B cell (primary cell): ENCODE measurements at regions of chr3 and their contacts with region 1.

Region 1: DNA sequence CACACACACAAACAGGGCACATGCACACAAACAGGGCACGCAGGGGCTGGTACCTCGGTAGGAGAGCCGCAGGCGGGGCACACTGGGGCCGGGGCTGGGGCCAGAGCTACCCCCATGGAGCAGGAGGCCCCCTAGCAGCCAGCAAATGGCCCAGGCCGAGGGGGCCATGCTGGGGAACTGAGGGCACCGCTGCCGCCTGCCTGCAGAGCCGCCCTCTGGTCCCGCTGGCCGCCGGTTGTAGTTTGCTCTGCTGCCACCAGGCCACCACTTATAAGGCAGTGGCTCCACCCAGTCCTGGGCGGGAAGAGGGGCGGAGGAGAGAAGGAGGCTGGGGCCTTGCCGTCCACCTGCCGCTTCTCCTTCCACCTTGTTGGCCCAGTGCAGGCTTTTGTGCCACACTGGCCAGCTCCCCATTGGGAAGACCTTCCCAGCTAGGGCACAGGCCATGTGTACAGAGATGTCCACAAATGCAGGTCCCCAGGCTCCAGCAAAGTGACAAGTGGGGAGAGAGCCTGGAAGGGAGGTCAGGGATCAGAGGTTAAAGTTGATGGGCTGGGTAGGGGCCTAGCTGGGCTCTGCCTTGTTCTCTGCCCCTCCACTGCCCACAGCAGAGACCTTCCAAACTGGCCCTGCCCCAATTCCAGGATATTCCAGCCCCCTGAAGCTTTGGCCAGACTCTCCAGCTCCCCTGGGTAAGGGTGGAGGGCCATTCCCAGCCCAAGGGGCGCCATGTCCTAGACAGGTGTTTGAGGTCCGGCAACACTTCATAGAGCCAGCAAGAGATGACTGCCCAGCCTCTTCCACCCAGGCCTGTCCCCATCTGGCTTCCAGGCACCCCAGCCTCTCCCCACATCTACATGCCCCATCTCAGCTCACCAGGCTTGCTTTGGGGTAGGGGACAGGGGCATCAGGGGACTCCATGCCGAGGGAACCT is at the start of gene SEMA3G:
- DNase-seq: peak; percentile 80
- ATAC-seq: peak; percentile 96
- H3K4me3 ChIP-seq: no peak within 1 kb of the TSS
- H3K4me3 Mint-ChIP-seq: no peak within 1 kb of the TSS
- H3K27ac ChIP-seq: no peak within 1 kb of the TSS
- H3K27ac Mint-ChIP-seq: no peak within 1 kb of the TSS
- H3K4me1 ChIP-seq: peaks cover 0 to 13% of the 10 kb centered on the region in 2 donors
- H3K4me1 Mint-ChIP-seq: peaks cover 6% of the 10 kb centered on the region
- H3K27me3 ChIP-seq: no peaks in the 10 kb centered on the region
- H3K27me3 Mint-ChIP-seq: no peaks in the 10 kb centered on the region
- CTCF ChIP-seq: peak; percentile 55
- total RNA-seq, gene SEMA3G: 0.27 and 0.42 TPM in 2 replicates

Region 2: DNA sequence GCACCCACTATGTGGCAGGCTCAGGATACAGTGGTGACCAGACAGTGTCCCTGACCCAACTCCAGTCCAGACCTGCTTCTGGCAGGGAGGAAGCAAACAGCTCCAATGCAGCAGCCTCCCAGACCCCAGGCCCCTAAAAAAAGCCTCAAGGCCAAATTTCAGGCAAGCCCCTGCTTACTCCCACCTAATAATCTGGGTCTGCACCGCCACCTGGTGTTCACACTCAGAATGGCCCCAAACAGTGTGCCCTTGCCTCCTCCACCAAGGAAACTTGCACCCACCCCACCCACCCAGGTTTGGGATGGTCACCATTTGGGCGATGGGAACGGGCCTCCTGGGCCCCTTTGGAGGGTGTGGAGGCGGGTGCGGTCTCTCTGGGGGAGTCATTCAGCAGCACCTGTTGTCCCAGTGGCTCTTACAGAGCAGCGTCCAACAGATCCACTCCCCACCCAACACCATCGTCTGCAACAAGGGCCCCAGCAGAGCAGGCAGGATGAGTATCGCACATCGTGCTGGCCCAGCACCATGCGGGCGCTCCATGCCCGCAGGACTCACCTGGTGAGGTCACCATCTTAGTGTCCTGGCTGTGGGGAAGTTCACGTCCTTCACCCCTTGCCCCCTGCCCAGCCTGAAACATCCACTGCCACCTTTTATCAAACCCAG is 1894.9 kb before region 1 on chr3:
- CTCF ChIA-PET with region 1: no interaction called
- POLR2A ChIA-PET with region 1: no interaction called
- intact Hi-C with region 1: no loop called
- DNase-seq: peak; percentile 70
- ATAC-seq: peak; percentile 68
- H3K4me3 ChIP-seq: no peak overlapping the region
- H3K4me3 Mint-ChIP-seq: no peak overlapping the region
- H3K27ac ChIP-seq: no peak overlapping the region
- H3K27ac Mint-ChIP-seq: no peak overlapping the region
- H3K4me1 ChIP-seq: no peaks in the 10 kb centered on the region
- H3K4me1 Mint-ChIP-seq: no peaks in the 10 kb centered on the region
- H3K27me3 ChIP-seq: peaks cover 0 to 3% (median 0%) of the 10 kb centered on the region in 4 experiments
- H3K27me3 Mint-ChIP-seq: no peaks in the 10 kb centered on the region
- CTCF ChIP-seq: peak; percentile 84

Region 3: GRCh38 chr3:52001443-52001974 is 443.6 kb before region 1 on chr3:
- CTCF ChIA-PET with region 1: interaction called, 7 read pairs
- POLR2A ChIA-PET with region 1: no interaction called
- intact Hi-C with region 1: loop called (anchors 1 kb)
- DNase-seq: peak; percentile 91
- ATAC-seq: peak; percentile 99
- H3K4me3 ChIP-seq: no peak overlapping the region
- H3K4me3 Mint-ChIP-seq: no peak overlapping the region
- H3K27ac ChIP-seq: no peak overlapping the region
- H3K27ac Mint-ChIP-seq: peak overlapping the region; percentile 37
- H3K4me1 ChIP-seq: peaks cover 6 to 13% of the 10 kb centered on the region in 2 donors
- H3K4me1 Mint-ChIP-seq: peaks cover 5% of the 10 kb centered on the region
- H3K27me3 ChIP-seq: no peaks in the 10 kb centered on the region
- H3K27me3 Mint-ChIP-seq: peaks cover 6% of the 10 kb centered on the region
- CTCF ChIP-seq: peak; percentile 90

Region 4: DNA sequence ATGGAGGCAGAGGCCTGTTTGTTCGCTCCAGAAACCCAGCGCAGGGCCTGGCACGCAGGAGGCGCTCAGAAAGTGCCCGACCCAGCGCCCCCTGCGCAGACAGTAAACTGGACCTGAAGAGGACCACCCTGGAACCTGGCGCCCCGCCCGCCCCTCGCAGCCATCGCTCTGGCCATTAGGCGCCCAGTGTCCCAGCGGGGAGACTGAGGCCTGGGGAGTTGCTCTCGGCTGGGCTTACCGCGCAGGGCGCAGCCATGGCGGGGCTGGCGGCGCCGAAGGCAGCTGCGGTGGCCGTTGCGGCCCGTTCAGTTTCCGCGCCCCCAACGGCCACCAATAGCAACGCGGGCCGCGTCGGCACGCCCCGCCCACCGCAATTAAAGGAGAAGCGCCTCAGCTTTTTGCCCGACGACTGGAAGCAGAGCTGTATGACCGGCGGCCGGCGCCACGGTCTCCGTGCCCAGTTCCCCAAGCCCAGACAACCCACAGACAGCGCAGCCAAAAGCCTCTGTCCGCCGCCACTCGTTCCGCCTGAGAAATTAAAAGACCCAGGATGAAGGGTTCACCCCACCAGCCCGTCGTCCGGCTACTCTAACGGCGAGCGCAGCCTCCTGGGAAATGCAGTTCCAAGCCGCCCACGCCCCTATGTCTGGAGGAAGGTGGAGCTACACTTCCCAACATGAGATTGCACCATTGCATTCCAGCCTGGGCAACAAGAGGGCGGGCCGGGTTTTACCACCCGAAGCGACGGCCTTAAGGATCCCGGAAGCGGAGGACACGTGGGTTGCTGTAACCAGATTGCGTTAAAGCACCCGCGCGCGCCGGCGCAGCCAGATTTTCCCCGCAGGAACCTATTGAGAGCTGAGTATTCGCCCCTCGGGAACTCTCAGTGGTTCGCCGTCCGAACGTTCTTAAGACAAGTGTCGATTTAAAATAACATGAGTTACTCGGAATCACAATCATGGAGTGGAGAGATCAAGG is 290.7 kb before region 1 on chr3 and contains the start of gene POC1A:
- CTCF ChIA-PET with region 1: no interaction called
- POLR2A ChIA-PET with region 1: no interaction called
- intact Hi-C with region 1: no loop called
- DNase-seq: peak; percentile 91
- ATAC-seq: peak; percentile 85
- H3K4me3 ChIP-seq: peak within 1 kb of the TSS; percentile 73 to 93 (median 92)
- H3K4me3 Mint-ChIP-seq: peak within 1 kb of the TSS; percentile 98
- H3K27ac ChIP-seq: peak within 1 kb of the TSS; percentile 79 to 81
- H3K27ac Mint-ChIP-seq: peak within 1 kb of the TSS; percentile 98
- H3K4me1 ChIP-seq: peaks cover 4 to 15% of the 10 kb centered on the region in 2 donors
- H3K4me1 Mint-ChIP-seq: peaks cover 14% of the 10 kb centered on the region
- H3K27me3 ChIP-seq: no peaks in the 10 kb centered on the region
- H3K27me3 Mint-ChIP-seq: no peaks in the 10 kb centered on the region
- CTCF ChIP-seq: peak; percentile 13
- total RNA-seq, gene POC1A: 2.4 and 2.8 TPM in 2 replicates

Region 5: DNA sequence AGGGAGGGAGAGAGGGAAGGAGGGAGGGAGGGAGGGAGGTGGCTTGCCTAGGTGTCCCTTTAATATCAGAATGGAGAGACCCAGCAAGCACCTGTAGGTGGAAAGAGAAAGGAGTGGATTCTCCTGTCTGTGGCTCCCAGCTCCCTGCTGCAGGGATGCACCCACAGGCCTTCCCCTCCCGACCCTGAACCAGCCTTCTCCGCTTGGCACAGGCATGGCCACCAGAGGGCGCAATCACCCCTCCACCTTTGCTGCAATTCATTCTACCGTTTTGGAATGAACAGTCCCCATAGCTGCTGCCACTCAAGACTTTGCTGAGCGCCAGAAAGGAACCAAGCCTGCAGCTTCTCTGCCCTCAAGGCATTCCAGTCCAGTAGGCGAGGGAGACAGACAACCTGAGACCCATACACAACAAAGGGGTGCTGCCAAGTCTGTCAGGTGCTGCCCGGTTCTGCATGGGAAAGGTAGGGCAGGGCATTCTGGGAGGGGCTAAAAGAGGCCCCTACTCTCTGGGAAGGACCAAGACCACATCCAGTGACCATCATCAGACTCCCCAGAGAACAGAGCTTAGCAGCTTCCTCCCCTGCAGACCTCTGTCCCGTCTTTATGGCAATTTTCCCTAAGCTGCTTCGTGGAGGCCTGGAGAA is 224.6 kb before region 1 on chr3:
- CTCF ChIA-PET with region 1: interaction called, 12 read pairs
- POLR2A ChIA-PET with region 1: no interaction called
- intact Hi-C with region 1: loop called (anchors 2 kb)
- DNase-seq: peak; percentile 85
- ATAC-seq: peak; percentile 59
- H3K4me3 ChIP-seq: no peak overlapping the region
- H3K4me3 Mint-ChIP-seq: peak overlapping the region; percentile 66
- H3K27ac ChIP-seq: no peak overlapping the region
- H3K27ac Mint-ChIP-seq: peak overlapping the region; percentile 86
- H3K4me1 ChIP-seq: peaks cover 64 to 90% of the 10 kb centered on the region in 2 donors
- H3K4me1 Mint-ChIP-seq: peaks cover 78% of the 10 kb centered on the region
- H3K27me3 ChIP-seq: no peaks in the 10 kb centered on the region
- H3K27me3 Mint-ChIP-seq: no peaks in the 10 kb centered on the region
- CTCF ChIP-seq: peak; percentile 83

Region 6: DNA sequence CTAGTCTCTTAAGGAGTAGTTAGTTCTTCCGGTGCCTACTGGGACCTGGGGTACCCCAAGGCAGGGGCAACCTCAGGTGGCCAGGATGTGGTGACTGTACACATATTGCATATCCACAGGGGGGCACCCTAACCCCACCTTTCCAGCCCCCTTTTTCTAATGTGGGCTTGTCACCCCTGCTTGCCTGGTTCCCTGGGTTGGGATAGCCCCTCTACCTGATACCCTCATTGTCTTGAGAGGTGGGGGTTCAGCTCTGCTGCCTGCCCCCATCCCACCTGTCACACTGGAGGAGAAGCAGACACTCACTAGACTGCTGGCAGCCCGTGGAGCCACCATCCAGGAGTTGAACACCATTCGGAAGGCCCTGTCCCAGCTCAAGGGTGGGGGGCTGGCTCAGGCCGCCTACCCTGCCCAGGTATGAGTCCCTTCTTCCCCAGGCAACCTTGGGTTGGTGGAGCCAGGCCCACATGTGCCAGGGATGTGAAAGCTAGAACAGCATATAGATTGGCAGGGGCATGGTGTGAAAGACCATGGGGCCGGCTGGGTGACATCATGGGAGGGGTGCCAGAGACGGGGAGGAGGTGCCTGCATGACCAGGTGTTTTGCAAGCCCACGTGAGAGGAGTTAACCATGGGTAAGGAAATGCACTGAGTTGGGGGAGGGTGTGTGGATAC is 153.5 kb before region 1 on chr3:
- CTCF ChIA-PET with region 1: interaction called, 14 read pairs
- POLR2A ChIA-PET with region 1: no interaction called
- intact Hi-C with region 1: loop called (anchors 1 kb)
- DNase-seq: peak; percentile 65
- ATAC-seq: peak; percentile 31
- H3K4me3 ChIP-seq: no peak overlapping the region
- H3K4me3 Mint-ChIP-seq: peak overlapping the region; percentile 37
- H3K27ac ChIP-seq: no peak overlapping the region
- H3K27ac Mint-ChIP-seq: peak overlapping the region; percentile 33
- H3K4me1 ChIP-seq: peaks cover 12 to 15% of the 10 kb centered on the region in 2 donors
- H3K4me1 Mint-ChIP-seq: peaks cover 30% of the 10 kb centered on the region
- H3K27me3 ChIP-seq: no peaks in the 10 kb centered on the region
- H3K27me3 Mint-ChIP-seq: no peaks in the 10 kb centered on the region
- CTCF ChIP-seq: peak; percentile 69

Region 7: GRCh38 chr3:52372822-52373504 is 72.2 kb before region 1 on chr3:
- CTCF ChIA-PET with region 1: interaction called, 7 read pairs
- POLR2A ChIA-PET with region 1: no interaction called
- intact Hi-C with region 1: loop called (anchors 1 kb)
- DNase-seq: peak; percentile 82
- ATAC-seq: peak; percentile 90
- H3K4me3 ChIP-seq: peak overlapping the region in 3 of 5 experiments; percentile 27 to 55 (median 33)
- H3K4me3 Mint-ChIP-seq: peak overlapping the region; percentile 80
- H3K27ac ChIP-seq: peak overlapping the region; percentile 43 to 71
- H3K27ac Mint-ChIP-seq: peak overlapping the region; percentile 85
- H3K4me1 ChIP-seq: peaks cover 17 to 20% of the 10 kb centered on the region in 2 donors
- H3K4me1 Mint-ChIP-seq: peaks cover 25% of the 10 kb centered on the region
- H3K27me3 ChIP-seq: no peaks in the 10 kb centered on the region
- H3K27me3 Mint-ChIP-seq: no peaks in the 10 kb centered on the region
- CTCF ChIP-seq: no peak

Region 8: GRCh38 chr3:52428151-52429005 is 16.7 kb before region 1 on chr3:
- CTCF ChIA-PET with region 1: interaction called, 61 read pairs
- POLR2A ChIA-PET with region 1: no interaction called
- intact Hi-C with region 1: loop called (anchors 1 kb)
- DNase-seq: peak; percentile 55
- ATAC-seq: peak; percentile 56
- H3K4me3 ChIP-seq: no peak overlapping the region
- H3K4me3 Mint-ChIP-seq: no peak overlapping the region
- H3K27ac ChIP-seq: no peak overlapping the region
- H3K27ac Mint-ChIP-seq: no peak overlapping the region
- H3K4me1 ChIP-seq: no peaks in the 10 kb centered on the region
- H3K4me1 Mint-ChIP-seq: no peaks in the 10 kb centered on the region
- H3K27me3 ChIP-seq: peaks cover 0 to 7% (median 0%) of the 10 kb centered on the region in 4 experiments
- H3K27me3 Mint-ChIP-seq: no peaks in the 10 kb centered on the region
- CTCF ChIP-seq: peak; percentile 69

Region 9: DNA sequence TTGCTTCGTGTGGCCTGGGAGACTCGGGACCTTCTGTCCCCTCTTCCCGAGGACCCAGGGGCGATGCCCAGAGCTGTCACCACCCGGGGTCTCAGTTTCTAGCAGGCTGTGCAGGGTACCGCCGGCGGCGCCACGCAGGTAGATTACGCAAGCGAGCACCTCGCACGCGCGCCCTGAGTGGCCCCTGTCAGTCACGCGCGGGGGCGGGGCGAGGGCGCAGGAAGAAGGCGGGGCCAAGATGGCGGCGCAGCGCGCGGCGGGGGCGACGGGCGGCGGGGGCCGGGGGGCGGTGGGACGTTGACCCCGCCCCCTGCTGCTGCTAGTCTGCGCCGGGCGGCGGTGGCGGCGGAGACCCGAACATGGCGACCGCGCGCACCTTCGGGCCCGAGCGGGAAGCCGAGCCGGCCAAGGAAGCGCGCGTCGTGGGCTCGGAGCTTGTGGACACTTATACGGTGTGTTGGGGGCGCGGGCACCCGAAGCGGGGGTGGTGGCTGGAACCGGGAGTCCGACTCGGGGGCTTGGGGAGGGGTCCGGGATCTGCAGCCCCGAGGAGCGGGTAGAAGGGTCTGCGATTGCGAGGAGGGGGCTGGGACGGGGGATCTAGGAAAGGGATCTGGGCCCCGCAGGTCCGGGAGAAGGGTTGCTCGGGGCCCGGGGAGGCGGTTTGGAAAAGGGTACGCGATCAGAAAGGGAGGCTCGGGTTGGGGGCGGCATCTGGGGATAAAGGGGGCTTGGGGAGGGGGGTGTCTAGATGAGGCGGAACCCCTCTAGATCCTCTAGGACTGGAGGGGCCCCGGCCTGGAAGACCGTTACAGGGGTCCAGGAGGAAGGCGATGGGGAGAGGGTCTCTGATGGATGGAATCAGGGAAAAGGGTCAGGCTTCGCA is 10.4 kb after region 1 on chr3 and contains the start of gene NISCH:
- CTCF ChIA-PET with region 1: interaction called, 23 read pairs
- POLR2A ChIA-PET with region 1: no interaction called
- intact Hi-C with region 1: loop called (anchors 1 kb)
- DNase-seq: peak; percentile 94
- ATAC-seq: peak; percentile 97
- H3K4me3 ChIP-seq: peak within 1 kb of the TSS; percentile 50 to 81 (median 70)
- H3K4me3 Mint-ChIP-seq: peak within 1 kb of the TSS; percentile 88
- H3K27ac ChIP-seq: peak within 1 kb of the TSS; percentile 88 to 92
- H3K27ac Mint-ChIP-seq: peak within 1 kb of the TSS; percentile 94
- H3K4me1 ChIP-seq: peaks cover 16 to 27% of the 10 kb centered on the region in 2 donors
- H3K4me1 Mint-ChIP-seq: peaks cover 38% of the 10 kb centered on the region
- H3K27me3 ChIP-seq: no peaks in the 10 kb centered on the region
- H3K27me3 Mint-ChIP-seq: no peaks in the 10 kb centered on the region
- CTCF ChIP-seq: no peak
- total RNA-seq, gene NISCH: 161 and 169 TPM in 2 replicates